ENCODE measurements at regions of chr18 and their contacts with region 1.

Region 1: DNA sequence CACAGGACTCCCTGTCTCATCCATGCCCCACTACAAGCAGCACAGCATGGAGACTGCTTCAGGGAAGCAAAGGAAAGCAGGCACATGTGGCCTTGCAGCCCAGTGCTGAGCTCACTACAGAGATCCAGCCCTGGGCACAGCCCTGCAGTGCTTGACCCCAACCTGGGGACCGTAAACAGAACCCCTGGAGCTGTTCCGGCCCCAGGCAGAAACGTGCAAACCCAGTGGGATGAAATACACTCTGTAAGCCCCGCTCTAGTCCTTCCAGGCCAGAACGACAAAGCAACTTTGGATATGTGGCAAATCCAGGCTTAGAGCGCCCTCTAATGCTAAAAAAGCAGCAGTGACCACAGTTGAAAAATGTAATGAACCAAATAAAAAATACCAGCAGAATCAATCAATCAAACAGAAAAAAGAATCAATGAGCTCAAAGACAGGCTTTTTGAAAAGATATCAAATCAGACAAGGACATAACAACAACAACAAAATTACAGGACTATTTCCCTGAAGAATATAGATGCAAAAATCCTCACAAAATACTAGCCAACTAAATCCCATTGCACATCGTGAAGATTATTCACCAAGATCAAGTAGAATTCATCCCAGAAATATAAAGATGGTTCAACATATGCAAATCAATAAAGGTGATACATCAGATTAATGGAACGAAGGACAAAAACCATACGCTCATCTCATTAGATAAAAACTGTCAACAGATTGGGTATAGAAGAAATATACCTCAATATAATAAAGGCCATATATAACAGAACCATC is 45.6 kb downstream of the ZNF519 start:
- DNase-seq: no peak
- ATAC-seq: peak; percentile 45

Region 2: GRCh38 chr18:13823707-13824395 is 262.8 kb before region 1 on chr18 and contains the start of gene MC5R:
- intact Hi-C with region 1: loop called (anchors 10 kb)
- DNase-seq: peak; percentile 82
- ATAC-seq: peak; percentile 95
- total RNA-seq, gene MC5R: not detected

Measured in left ventricle myocardium superior (tissue), 1 donor.